Thyroid gland (tissue), 4 donors: ENCODE measurements at regions of chr6 and their contacts with region 1.

Region 1: GRCh38 chr6:79233611-79234149 is 802 bp downstream of the HMGN3 start:
- DNase-seq: peak; percentile 92
- H3K4me3 ChIP-seq: peak overlapping the region; percentile 62 to 89 (median 63)
- H3K27ac ChIP-seq: peak overlapping the region; percentile 67 to 87 (median 86)
- H3K4me1 ChIP-seq: peaks cover 9 to 14% of the 10 kb centered on the region in 2 donors
- H3K27me3 ChIP-seq: no peaks in the 10 kb centered on the region
- CTCF ChIP-seq: peak in 5 of 6 experiments; percentile 15 to 47 (median 36)
- POLR2A ChIP-seq: peak in 1 of 2 donors; percentile 83

Region 2: DNA sequence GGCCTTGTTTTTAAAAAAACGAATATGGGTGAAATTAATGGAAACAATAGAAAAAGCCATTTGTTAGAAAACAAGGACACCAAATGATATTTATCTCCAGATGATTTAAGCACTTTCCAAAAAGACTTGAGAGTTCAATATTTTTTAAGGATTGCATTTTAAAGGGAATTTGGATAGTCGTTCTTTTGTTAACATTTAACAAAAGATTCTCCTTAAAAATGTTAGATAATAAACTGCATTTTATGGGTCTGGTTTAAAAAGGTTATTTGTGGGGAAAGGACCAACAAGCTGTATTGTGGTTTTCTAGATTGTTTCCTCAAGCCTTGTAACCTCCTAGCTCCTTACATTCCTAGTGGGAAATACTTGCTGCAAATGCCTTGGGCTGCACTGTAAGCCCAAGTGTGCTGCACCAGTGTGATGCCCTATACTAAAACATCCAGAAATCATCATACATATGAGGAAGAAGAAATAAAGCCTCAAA is 154.1 kb before region 1 on chr6:
- intact Hi-C with region 1: loop called (anchors 10 kb)
- DNase-seq: no peak
- H3K4me3 ChIP-seq: no peak overlapping the region
- H3K27ac ChIP-seq: no peak overlapping the region
- H3K4me1 ChIP-seq: peaks cover 6 to 12% of the 10 kb centered on the region in 2 donors
- H3K27me3 ChIP-seq: no peaks in the 10 kb centered on the region
- CTCF ChIP-seq: no peak
- POLR2A ChIP-seq: no peak

Region 3: GRCh38 chr6:79536954-79537747 is 303.5 kb after region 1 on chr6 and contains the start of gene LCA5:
- intact Hi-C with region 1: loop called (anchors 10 kb)
- DNase-seq: peak; percentile 95
- H3K4me3 ChIP-seq: peak within 1 kb of the TSS; percentile 16 to 83 (median 82)
- H3K27ac ChIP-seq: peak within 1 kb of the TSS; percentile 92 to 93 (median 93)
- H3K4me1 ChIP-seq: peaks cover 0 to 9% of the 10 kb centered on the region in 2 donors
- H3K27me3 ChIP-seq: no peaks in the 10 kb centered on the region
- CTCF ChIP-seq: no peak
- POLR2A ChIP-seq: peak in 1 of 2 donors; percentile 86
- total RNA-seq, gene LCA5: 13.7 to 18.8 (median 16.3) TPM

Region 4: GRCh38 chr6:79750806-79751205 is 517.1 kb after region 1 on chr6:
- intact Hi-C with region 1: no loop called
- DNase-seq: no peak
- H3K4me3 ChIP-seq: no peak overlapping the region
- H3K27ac ChIP-seq: no peak overlapping the region
- H3K4me1 ChIP-seq: no peaks in the 10 kb centered on the region
- H3K27me3 ChIP-seq: no peaks in the 10 kb centered on the region
- CTCF ChIP-seq: no peak
- POLR2A ChIP-seq: no peak

Region 5: GRCh38 chr6:79894939-79895338 is 661.3 kb after region 1 on chr6:
- intact Hi-C with region 1: no loop called
- DNase-seq: no peak
- H3K4me3 ChIP-seq: no peak overlapping the region
- H3K27ac ChIP-seq: no peak overlapping the region
- H3K4me1 ChIP-seq: no peaks in the 10 kb centered on the region
- H3K27me3 ChIP-seq: no peaks in the 10 kb centered on the region
- CTCF ChIP-seq: no peak
- POLR2A ChIP-seq: no peak